ENCODE measurements at regions of chr6 and their contacts with region 1.

Region 1: DNA sequence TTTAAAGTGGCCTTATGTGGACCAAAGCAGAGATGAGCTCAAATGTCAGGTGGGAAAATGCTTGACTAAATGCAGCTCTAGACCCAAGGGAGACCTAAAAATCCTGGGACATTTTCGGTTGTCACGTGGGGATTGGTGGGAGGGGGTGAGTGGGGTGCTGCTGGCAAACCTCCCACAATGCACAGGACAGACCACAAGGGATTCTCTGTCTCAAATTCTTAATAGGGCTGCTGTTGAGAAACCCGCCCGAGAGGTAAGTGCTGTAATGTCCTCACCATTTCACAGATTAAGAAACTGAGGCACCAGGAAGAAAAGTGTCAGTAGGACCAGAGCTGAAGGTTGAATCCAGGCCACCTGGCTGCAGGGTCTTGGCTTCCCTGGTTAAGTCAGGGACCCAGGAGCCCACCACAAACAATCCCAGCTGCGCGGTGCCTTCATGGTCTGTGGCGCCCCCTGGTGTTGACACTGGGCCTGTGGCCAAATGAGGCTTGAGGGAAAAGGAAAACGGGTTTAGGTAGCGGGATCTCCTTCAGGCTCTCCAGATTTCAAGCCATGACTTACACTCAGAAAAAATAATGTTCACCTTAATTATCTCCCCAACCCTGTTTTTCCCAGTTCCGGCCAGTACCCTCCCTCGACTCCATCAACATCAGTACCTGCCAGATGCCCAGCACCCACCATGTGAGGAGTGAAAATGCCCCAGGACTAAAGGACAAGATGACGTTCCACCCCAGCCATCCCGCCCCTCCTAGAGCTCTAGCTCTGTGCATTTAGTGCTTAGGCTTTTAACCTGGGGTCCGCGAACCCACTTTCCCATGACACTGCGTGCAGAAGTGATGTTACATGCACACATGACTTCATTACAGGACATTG is 7.2 kb downstream of the HLA-G start:
- DNase-seq: peak in 2 of 6 donors; percentile 47 to 81
- ATAC-seq: peak; percentile 53 to 86 (median 79)
- H3K4me3 ChIP-seq: no peak overlapping the region
- H3K27ac ChIP-seq: no peak overlapping the region
- H3K4me1 ChIP-seq: no peaks in the 10 kb centered on the region
- H3K27me3 ChIP-seq: peaks cover 0 to 4% (median 0%) of the 10 kb centered on the region in 4 donors
- CTCF ChIP-seq: peak; percentile 67 to 94 (median 72)

Region 2: GRCh38 chr6:29705389-29706231 is 129.2 kb before region 1 on chr6:
- intact Hi-C with region 1: loop called in 1 of 3 experiments (anchors 10 kb)
- DNase-seq: peak in 2 of 6 donors; percentile 26 to 46
- ATAC-seq: peak; percentile 69 to 94 (median 82)
- H3K4me3 ChIP-seq: no peak overlapping the region
- H3K27ac ChIP-seq: no peak overlapping the region
- H3K4me1 ChIP-seq: no peaks in the 10 kb centered on the region
- H3K27me3 ChIP-seq: peaks cover 0 to 6% (median 0%) of the 10 kb centered on the region in 4 donors
- CTCF ChIP-seq: peak in 2 of 4 donors; percentile 18 to 32

Region 3: GRCh38 chr6:29737707-29738630 is 96.8 kb before region 1 on chr6:
- intact Hi-C with region 1: loop called (anchors 5 to 10 kb)
- DNase-seq: peak in 3 of 6 donors; percentile 54 to 74 (median 67)
- ATAC-seq: peak; percentile 80 to 99 (median 95)
- H3K4me3 ChIP-seq: no peak overlapping the region
- H3K27ac ChIP-seq: no peak overlapping the region
- H3K4me1 ChIP-seq: no peaks in the 10 kb centered on the region
- H3K27me3 ChIP-seq: no peaks in the 10 kb centered on the region
- CTCF ChIP-seq: peak; percentile 33 to 51 (median 44)

Region 4: DNA sequence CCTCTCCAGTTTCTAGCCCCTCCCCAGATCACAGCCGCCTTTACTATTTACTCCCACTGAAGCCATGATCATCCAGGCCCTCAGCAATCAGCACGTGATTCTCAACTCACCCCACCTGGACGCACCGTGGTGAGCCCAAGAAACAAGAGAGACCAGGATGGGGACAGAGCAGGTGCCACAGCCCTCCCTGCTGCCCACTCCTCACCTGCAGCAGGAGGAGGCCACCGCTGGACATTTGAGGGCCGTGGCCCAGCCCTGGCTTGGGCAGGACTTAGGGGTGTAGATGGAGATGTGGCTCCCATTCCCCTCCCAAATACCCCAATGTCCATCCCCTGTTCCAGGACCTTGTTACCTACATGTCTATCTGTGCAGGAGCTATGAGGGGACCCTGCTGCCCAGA is 91.2 kb before region 1 on chr6:
- intact Hi-C with region 1: loop called (anchors 5 to 10 kb)
- DNase-seq: no peak
- ATAC-seq: no peak
- H3K4me3 ChIP-seq: no peak overlapping the region
- H3K27ac ChIP-seq: no peak overlapping the region
- H3K4me1 ChIP-seq: peaks cover 0 to 6% (median 0%) of the 10 kb centered on the region in 3 donors
- H3K27me3 ChIP-seq: no peaks in the 10 kb centered on the region
- CTCF ChIP-seq: no peak

Region 5: DNA sequence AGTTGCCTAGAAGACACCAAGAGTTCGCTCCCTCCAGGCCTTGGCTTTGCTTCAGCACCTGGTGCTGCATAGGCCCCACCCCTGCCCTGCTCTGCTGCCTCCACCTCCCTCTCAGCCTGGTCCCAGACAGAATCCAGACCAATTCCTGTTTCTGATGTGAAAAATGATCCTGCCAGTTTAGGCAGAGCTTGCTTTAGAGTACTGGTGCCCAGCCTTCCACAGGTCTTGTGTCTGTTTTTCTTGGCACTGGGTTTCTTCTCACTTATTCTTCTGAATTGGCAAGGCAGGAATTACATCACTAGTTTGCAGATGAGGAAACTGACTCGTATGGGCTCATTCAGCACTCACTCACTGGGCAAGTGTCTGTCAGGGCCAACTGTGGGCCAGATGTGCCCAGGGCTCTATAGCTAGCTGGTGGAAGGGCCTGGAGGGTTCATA is 160.6 kb after region 1 on chr6:
- intact Hi-C with region 1: no loop called
- DNase-seq: no peak
- ATAC-seq: peak in 1 of 4 donors; percentile 45
- H3K4me3 ChIP-seq: no peak overlapping the region
- H3K27ac ChIP-seq: no peak overlapping the region
- H3K4me1 ChIP-seq: no peaks in the 10 kb centered on the region
- H3K27me3 ChIP-seq: no peaks in the 10 kb centered on the region
- CTCF ChIP-seq: no peak

Measured in pancreas (tissue), 10 donors.